H1 (cell line): ENCODE measurements at regions of chr12 and their contacts with region 1.

Region 1: GRCh38 chr12:103326190-103326589 is 169.6 kb downstream of the C12orf42 start:
- DNase-seq: no peak
- H3K4me3 ChIP-seq: no peak overlapping the region
- H3K27ac ChIP-seq: no peak overlapping the region
- H3K4me1 ChIP-seq: no peaks in the 10 kb centered on the region
- H3K27me3 ChIP-seq: no peaks in the 10 kb centered on the region
- CTCF ChIP-seq: peak in 2 of 3 experiments; percentile 58 to 67; a peak in 3 of 4 replicates
- EP300 ChIP-seq: no peak
- POLR2A ChIP-seq: no peak
- RAD21 ChIP-seq: peak; percentile 71 to 78

Region 2: DNA sequence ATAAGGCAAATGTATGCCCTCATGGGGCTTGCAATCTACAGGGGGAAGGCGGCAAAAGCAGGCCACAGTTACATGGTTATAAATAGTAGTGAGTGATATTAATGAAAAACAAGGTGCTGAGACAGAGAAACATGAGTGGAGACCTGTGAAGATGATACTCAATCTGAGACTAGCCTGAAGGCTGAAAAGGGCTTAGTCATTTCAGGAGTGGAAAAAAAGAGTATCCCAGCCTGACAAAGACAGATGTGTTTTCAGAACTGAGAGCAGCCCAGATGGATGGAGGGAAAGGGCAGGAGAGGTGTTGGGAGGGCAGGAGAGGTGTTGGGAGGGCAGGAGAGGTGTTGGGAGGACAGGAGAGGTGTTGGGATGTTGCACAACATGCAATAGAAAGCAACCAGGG is 12.3 kb before region 1 on chr12:
- CTCF ChIA-PET with region 1: interaction called, 17 read pairs
- POLR2A ChIA-PET with region 1: no interaction called
- DNase-seq: no peak
- H3K4me3 ChIP-seq: no peak overlapping the region
- H3K27ac ChIP-seq: no peak overlapping the region
- H3K4me1 ChIP-seq: no peaks in the 10 kb centered on the region
- H3K27me3 ChIP-seq: no peaks in the 10 kb centered on the region
- CTCF ChIP-seq: no peak
- EP300 ChIP-seq: no peak
- POLR2A ChIP-seq: no peak
- RAD21 ChIP-seq: no peak